Caki2 (cell line): ENCODE measurements at regions of chr20 and their contacts with region 1.

Region 1: GRCh38 chr20:50731055-50731871 is at the start of gene PARD6B:
- DNase-seq: peak; percentile 100
- total RNA-seq, gene PARD6B: 58.6 and 82.5 TPM in 2 replicates

Region 2: DNA sequence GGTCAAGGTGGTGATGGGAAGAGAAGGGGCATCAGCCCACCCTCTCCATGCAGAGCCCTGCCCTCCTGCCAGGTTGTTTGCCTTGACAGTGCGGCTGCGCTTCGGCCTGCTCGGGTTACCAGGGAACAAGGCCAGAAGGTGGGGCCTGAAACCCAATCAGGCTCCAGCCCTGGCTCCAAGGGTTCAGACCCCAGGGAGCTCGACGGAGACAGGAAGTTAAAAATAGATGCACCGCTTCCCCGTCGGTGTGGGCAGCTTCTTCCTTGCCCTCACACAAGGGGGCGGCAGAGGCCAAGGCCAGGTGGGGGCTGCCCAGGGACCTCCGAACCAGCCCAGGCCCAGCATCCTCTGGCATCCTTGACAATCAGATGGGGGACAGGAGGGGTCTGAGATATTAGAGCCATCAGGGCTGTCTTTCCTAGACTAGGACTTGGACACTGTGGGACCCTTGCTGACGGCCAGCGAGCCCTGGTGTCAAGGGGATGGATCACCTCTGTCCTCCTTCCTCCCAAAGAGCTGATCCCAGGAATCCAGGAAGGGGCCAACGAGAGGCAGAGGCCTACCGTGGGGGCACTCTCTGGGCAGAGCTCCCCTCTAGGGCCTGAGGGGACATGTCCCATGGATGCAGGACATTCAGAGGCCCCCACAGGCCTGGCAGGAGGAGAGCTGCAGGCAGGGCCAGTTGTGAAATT is 105.1 kb before region 1 on chr20:
- in situ Hi-C with region 1: loop called (anchors 10 kb)
- DNase-seq: no peak

Region 3: GRCh38 chr20:50663095-50663850 is 68.0 kb before region 1 on chr20:
- in situ Hi-C with region 1: loop called (anchors 10 kb)
- DNase-seq: peak; percentile 79